Activated CD4-positive, alpha-beta T cell treated with anti-CD3 and anti-CD28 coated beads for 36 hours (primary cell): ENCODE measurements at regions of chr18 and their contacts with region 1.

Region 1: GRCh38 chr18:158128-159036 is at the start of gene USP14:
- DNase-seq: peak; percentile 99
- ATAC-seq: peak; percentile 97
- H3K4me3 Mint-ChIP-seq: peak within 1 kb of the TSS; percentile 89
- H3K27ac Mint-ChIP-seq: peak within 1 kb of the TSS; percentile 87
- H3K4me1 Mint-ChIP-seq: peaks cover 31% of the 10 kb centered on the region
- H3K27me3 Mint-ChIP-seq: no peaks in the 10 kb centered on the region
- total RNA-seq, gene USP14: 94.7 to 101 TPM

Region 2: DNA sequence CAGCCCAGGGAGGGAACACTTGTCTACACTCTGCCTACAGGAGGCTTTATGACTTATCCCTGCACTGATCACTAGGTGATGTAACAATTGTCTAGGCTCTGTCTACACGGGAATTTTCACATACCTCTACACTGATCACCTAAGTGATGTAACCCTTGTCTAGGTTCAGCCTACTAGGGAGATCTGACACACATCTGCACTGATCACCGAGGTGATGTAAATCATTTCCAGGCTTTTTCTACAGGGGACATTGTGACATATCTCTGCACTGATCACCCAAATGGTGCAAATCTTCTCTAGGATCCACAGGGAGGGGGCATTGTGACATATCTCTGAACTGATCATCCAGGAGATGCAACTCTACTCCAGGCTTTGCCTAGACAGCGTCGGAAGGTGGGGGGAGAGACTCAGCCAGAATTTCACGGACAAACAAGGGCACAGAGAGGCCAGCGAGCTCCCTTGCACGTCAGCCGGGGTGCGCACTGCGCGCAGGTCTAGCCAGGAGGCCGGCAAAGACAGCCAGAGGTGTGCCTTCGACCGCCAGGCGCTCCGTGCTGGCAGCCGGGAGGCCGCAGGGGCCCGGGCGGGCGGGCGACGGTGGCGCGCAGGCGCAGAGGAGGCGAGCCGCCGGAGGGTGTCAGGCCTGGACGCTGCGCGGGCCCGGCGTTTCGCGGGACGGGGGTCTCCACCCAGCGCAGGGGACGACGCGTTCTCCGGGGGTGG is 46.9 kb before region 1 on chr18:
- CTCF ChIA-PET with region 1: no interaction called
- POLR2A ChIA-PET with region 1: no interaction called
- intact Hi-C with region 1: loop called (anchors 1 to 2 kb)
- DNase-seq: peak; percentile 80
- ATAC-seq: peak; percentile 64
- H3K4me3 Mint-ChIP-seq: peak overlapping the region; percentile 69
- H3K27ac Mint-ChIP-seq: peak overlapping the region; percentile 88
- H3K4me1 Mint-ChIP-seq: peaks cover 12% of the 10 kb centered on the region
- H3K27me3 Mint-ChIP-seq: no peaks in the 10 kb centered on the region

Region 3: DNA sequence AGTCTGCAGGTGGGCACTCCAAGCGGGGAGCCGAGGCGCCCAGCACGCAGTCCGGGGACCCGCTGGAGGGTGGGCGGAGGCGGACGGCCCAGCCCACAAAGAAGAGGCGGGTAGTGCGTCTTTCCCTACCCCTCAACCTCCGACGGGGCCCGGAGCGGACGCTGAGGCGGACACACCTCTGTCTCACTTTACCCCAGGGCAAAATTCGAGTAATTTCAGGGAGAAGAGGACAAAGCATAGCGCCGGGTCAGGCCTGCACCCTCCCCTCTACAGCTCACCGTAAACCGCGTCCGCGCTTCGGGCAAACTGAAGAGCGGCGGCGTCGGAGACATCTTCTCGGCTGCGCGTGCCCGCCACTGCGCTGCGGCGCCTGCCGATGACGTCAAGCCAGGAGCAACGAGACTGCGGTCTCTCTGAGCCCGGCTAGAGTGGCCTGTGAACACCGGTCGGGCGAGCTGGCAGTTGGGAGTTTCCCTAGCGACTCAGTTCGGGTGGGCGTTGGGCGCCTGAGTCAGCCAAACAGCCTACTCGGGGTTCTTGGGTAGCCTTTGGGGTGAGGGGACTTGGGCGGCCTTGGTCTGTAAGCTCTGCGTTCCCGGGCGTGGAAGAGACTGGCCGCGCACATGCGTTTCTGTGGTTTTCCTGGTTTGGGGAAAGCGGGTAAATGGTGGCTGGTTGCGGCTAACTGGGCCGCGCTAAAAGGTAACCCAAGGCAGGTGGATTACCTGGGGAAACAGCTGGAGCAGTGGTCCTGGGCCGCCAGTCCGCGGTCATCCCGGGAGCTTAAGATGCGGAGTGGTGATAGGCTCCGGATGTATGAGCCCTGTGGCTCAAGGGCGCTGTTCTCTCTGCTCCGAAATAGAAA is 109.5 kb after region 1 on chr18 and contains the start of gene THOC1:
- CTCF ChIA-PET with region 1: interaction called, 3 read pairs
- POLR2A ChIA-PET with region 1: interaction called, 6 read pairs
- intact Hi-C with region 1: loop called (anchors 1 kb)
- DNase-seq: peak; percentile 98
- ATAC-seq: peak; percentile 92
- H3K4me3 Mint-ChIP-seq: peak within 1 kb of the TSS; percentile 100
- H3K27ac Mint-ChIP-seq: peak within 1 kb of the TSS; percentile 100
- H3K4me1 Mint-ChIP-seq: peaks cover 39% of the 10 kb centered on the region
- H3K27me3 Mint-ChIP-seq: no peaks in the 10 kb centered on the region
- total RNA-seq, gene THOC1: 62.1 to 64.6 TPM

Region 4: GRCh38 chr18:712401-713134 is 554.2 kb after region 1 on chr18 and contains the start of gene ENOSF1:
- CTCF ChIA-PET with region 1: no interaction called
- POLR2A ChIA-PET with region 1: no interaction called
- intact Hi-C with region 1: loop called in 1 of 2 experiments (anchors 1 kb)
- DNase-seq: peak; percentile 95
- ATAC-seq: peak; percentile 91
- H3K4me3 Mint-ChIP-seq: peak within 1 kb of the TSS; percentile 94
- H3K27ac Mint-ChIP-seq: peak within 1 kb of the TSS; percentile 99
- H3K4me1 Mint-ChIP-seq: peaks cover 53% of the 10 kb centered on the region
- H3K27me3 Mint-ChIP-seq: no peaks in the 10 kb centered on the region
- total RNA-seq, gene ENOSF1: 92.6 to 97.4 TPM